IMR-90 (cell line): ENCODE measurements at regions of chr6 and their contacts with region 1.

Region 1: GRCh38 chr6:73236147-73236750 is 11.0 kb upstream of the KHDC1L start:
- DNase-seq: peak; percentile 97
- ATAC-seq: peak; percentile 93
- H3K4me3 ChIP-seq: no peak overlapping the region
- H3K27ac ChIP-seq: peak overlapping the region; percentile 82
- H3K4me1 ChIP-seq: peaks cover 4% of the 10 kb centered on the region
- H3K27me3 ChIP-seq: no peaks in the 10 kb centered on the region
- CTCF ChIP-seq: no peak
- POLR2A ChIP-seq: no peak
- RAD21 ChIP-seq: no peak

Region 2: GRCh38 chr6:71533939-71534379 is 1702.3 kb before region 1 on chr6:
- CTCF ChIA-PET with region 1: no interaction called
- POLR2A ChIA-PET with region 1: interaction called, 15 read pairs
- dilution Hi-C with region 1: no loop called
- in situ Hi-C with region 1: no loop called
- intact Hi-C with region 1: no loop called
- DNase-seq: peak; percentile 46
- ATAC-seq: peak; percentile 40; the same call in 1 of the 2 replicates
- H3K4me3 ChIP-seq: no peak overlapping the region
- H3K27ac ChIP-seq: no peak overlapping the region
- H3K4me1 ChIP-seq: no peaks in the 10 kb centered on the region; the same call in 1 of the 2 replicates
- H3K27me3 ChIP-seq: no peaks in the 10 kb centered on the region
- CTCF ChIP-seq: peak; percentile 70
- POLR2A ChIP-seq: no peak
- RAD21 ChIP-seq: peak; percentile 63

Region 3: DNA sequence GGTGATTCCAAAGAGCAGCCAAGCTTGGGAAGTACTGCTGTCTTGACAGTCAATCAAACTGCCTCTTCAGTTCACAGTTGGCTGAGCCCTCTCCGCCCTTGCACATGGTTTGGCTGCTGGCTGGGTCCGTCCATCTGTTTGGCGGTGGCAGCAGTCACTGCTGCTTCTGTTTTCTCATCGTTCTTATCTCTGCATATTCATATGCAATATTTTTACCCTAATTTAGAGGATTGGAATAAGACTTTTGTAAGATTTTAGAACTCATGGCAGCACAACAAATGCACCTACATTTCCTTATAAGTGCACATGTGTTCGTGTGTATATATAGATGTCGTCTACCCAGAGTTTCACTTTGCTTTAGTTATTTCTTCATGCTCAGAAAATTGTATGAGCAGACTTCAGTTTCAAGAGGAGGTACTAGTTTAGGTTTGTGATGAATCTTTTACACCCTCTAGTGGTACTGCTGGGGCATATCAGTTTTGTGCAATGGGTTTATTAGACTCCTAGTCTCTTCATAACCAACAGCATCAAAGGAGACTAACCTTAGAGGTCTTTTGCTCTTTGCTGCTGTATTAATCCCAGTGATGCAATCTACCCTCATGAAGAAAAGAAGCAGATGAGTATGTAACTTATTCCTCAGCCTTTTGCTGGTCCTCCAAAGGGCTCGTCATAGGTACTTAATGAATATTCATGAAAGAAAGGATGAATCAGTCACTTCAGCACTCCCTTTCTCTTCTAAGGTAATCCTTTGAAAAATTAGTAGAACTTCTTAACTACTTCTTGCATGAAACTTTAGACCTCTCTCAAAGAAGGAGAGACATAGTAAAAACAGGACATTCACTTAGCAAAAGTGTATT is 55.3 kb before region 1 on chr6:
- CTCF ChIA-PET with region 1: no interaction called
- POLR2A ChIA-PET with region 1: no interaction called
- dilution Hi-C with region 1: no loop called
- in situ Hi-C with region 1: no loop called
- intact Hi-C with region 1: no loop called
- DNase-seq: peak; percentile 84
- ATAC-seq: peak; percentile 98
- H3K4me3 ChIP-seq: peak overlapping the region; percentile 42
- H3K27ac ChIP-seq: no peak overlapping the region
- H3K4me1 ChIP-seq: 0 out of 2 replicates have a peak, but pooled peaks cover 2% of the 10 kb centered on the region
- H3K27me3 ChIP-seq: peaks cover 2% of the 10 kb centered on the region
- CTCF ChIP-seq: peak; percentile 90
- POLR2A ChIP-seq: no peak
- RAD21 ChIP-seq: peak; percentile 91